Activated CD4-positive, alpha-beta T cell treated with anti-CD3 and anti-CD28 coated beads for 36 hours (primary cell): ENCODE measurements at regions of chr6 and their contacts with region 1.

Region 1: DNA sequence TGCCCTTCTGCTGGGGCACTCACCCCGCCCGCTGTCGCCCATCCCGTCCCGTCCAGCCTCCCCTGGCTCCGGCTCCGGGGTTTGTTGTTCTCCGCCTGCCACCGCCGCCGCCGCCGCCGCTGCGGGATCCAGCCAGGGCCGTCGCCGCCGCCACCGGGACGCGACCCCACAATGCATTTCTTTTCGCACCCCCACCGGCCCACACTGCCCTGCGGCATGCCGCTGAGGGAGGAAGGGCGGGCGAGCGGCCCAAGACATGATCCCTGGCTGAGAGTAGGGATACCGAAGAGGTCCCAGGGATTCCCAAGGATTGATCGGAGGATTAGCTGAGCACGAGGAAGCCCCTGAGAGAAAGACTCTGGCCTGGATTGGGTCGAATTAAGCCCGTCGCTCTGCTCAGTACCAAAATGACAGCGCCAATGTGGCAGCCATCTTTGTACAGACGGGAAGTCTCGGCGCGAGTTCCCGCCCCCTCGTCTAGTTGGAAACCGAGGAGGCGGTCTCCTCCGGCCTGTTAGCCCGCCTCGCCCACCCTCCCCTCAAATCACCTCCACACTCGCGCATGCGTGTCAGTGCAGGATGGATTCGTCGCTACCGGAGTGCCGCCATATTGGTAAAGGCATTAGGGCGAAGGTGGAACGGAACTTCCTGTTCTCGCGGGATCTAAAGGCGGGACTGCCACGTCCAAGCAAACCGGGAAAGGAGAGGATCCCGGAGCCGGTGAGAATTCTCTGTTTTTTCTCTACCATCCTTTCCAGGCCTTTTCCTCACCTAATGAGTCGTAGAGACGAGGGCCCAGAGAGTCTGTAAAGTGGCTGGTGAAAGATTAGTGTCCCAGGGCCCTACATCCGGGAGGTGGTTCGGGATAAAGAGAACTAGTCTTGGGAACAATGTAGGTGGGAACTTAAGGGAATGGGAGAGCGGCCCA is at the starts of genes RXRB and SLC39A7:
- DNase-seq: peak; percentile 100
- ATAC-seq: peak; percentile 64
- H3K4me3 Mint-ChIP-seq: peak within 1 kb of the TSS; percentile 100
- H3K27ac Mint-ChIP-seq: peak within 1 kb of the TSS; percentile 99
- H3K4me1 Mint-ChIP-seq: peaks cover 64% of the 10 kb centered on the region
- H3K27me3 Mint-ChIP-seq: no peaks in the 10 kb centered on the region
- total RNA-seq, gene RXRB: 41.0 to 45.4 TPM
- total RNA-seq, gene SLC39A7: 33.0 to 41.8 TPM

Region 2: GRCh38 chr6:32177788-32178546 is 1022.5 kb before region 1 on chr6 and contains the start of gene RNF5:
- CTCF ChIA-PET with region 1: no interaction called
- POLR2A ChIA-PET with region 1: no interaction called
- intact Hi-C with region 1: loop called (anchors 5 kb)
- DNase-seq: peak; percentile 96
- ATAC-seq: peak; percentile 89
- H3K4me3 Mint-ChIP-seq: peak within 1 kb of the TSS; percentile 92
- H3K27ac Mint-ChIP-seq: peak within 1 kb of the TSS; percentile 98
- H3K4me1 Mint-ChIP-seq: peaks cover 70% of the 10 kb centered on the region
- H3K27me3 Mint-ChIP-seq: no peaks in the 10 kb centered on the region
- total RNA-seq, gene RNF5: 51.7 to 65.6 TPM

Region 3: DNA sequence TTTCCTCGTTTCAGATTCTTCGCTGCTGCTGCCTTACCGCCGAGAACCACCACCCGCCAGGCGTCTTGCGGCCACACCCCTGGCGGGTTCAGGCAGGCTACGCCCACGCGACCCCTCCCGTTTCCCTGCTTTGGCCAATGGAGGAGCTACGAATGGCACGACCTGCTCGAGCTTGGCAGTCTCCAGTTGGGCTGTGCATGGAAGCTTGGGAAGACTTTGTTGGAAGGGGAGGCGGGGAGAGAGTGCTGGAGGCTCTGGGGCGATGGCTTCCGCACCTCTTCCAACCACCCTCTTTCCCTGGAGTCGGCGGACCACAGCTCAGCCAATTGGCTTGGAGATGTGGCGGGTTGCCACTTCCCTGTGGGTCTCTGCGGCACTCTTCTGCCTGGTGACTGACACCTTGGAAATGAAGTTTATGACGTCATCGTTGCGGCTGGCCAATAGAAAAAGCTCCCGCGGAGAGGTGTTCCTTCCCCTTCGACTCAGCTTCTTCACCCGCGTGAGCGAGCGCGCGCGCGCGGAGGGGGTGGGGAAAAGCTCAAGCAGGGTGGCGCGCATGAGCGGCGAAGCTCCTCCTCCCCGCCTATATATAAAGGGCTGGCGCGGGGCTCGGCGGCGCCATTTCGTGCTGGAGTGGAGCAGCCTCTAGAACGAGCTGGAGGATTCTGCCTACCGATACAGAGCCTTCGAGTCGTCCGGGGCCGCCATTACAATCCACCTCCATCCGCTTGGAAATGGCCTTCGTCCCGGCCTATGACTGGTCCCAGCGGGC is 228.7 kb before region 1 on chr6:
- CTCF ChIA-PET with region 1: no interaction called
- POLR2A ChIA-PET with region 1: interaction called, 7 read pairs
- intact Hi-C with region 1: loop called (anchors 1 to 5 kb)
- DNase-seq: peak; percentile 100
- ATAC-seq: peak; percentile 43
- H3K4me3 Mint-ChIP-seq: peak overlapping the region; percentile 98
- H3K27ac Mint-ChIP-seq: peak overlapping the region; percentile 100
- H3K4me1 Mint-ChIP-seq: peaks cover 27% of the 10 kb centered on the region
- H3K27me3 Mint-ChIP-seq: no peaks in the 10 kb centered on the region

Region 4: GRCh38 chr6:33000055-33000454 is 200.4 kb before region 1 on chr6:
- CTCF ChIA-PET with region 1: no interaction called
- POLR2A ChIA-PET with region 1: no interaction called
- intact Hi-C with region 1: no loop called
- DNase-seq: peak; percentile 45
- ATAC-seq: peak; percentile 65
- H3K4me3 Mint-ChIP-seq: no peak overlapping the region
- H3K27ac Mint-ChIP-seq: no peak overlapping the region
- H3K4me1 Mint-ChIP-seq: peaks cover 7% of the 10 kb centered on the region
- H3K27me3 Mint-ChIP-seq: peaks cover 15% of the 10 kb centered on the region

Region 5: GRCh38 chr6:33241968-33242367 is 41.5 kb after region 1 on chr6:
- CTCF ChIA-PET with region 1: interaction called, 10 read pairs
- POLR2A ChIA-PET with region 1: no interaction called
- intact Hi-C with region 1: loop called in 1 of 2 experiments (anchors 1 kb)
- DNase-seq: no peak
- ATAC-seq: peak; percentile 94
- H3K4me3 Mint-ChIP-seq: peak overlapping the region; percentile 35
- H3K27ac Mint-ChIP-seq: no peak overlapping the region
- H3K4me1 Mint-ChIP-seq: peaks cover 11% of the 10 kb centered on the region
- H3K27me3 Mint-ChIP-seq: peaks cover 19% of the 10 kb centered on the region

Region 6: GRCh38 chr6:33317669-33318425 is 117.4 kb after region 1 on chr6 and contains the start of gene ZBTB22:
- CTCF ChIA-PET with region 1: no interaction called
- POLR2A ChIA-PET with region 1: no interaction called
- intact Hi-C with region 1: loop called in 1 of 2 experiments (anchors 1 kb)
- DNase-seq: peak; percentile 98
- ATAC-seq: peak; percentile 69
- H3K4me3 Mint-ChIP-seq: peak within 1 kb of the TSS; percentile 80
- H3K27ac Mint-ChIP-seq: peak within 1 kb of the TSS; percentile 93
- H3K4me1 Mint-ChIP-seq: peaks cover 70% of the 10 kb centered on the region
- H3K27me3 Mint-ChIP-seq: no peaks in the 10 kb centered on the region
- total RNA-seq, gene ZBTB22: 9.0 to 9.9 TPM

Region 7: DNA sequence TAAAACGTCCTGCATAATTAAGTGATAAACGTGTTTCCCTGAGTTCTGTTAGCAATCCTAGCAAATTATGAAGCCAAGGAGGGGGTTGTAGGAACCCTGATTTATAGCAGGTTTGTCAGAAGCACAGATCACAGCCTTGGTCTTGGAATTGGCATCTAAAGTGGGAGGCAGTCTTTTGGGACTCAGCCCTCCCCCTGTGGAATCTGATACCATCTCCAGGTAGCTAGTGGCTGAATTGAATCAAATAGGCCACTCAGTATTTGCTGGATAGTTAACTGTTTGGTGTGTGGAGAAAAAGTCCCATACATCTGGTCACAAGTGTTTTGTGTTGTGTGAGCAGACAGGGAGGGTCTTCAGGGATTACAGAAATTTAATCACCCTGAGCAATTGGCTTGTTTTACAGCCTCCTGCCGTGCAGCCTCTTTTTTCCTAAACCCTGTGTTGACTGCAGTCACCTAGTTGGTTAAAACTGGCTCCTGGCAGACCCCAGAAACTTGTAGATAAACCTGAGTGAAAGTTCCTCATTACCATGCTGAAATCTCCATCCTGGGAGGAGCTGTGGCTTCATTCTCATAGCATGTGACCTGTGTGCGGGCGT is 172.1 kb after region 1 on chr6:
- CTCF ChIA-PET with region 1: no interaction called
- POLR2A ChIA-PET with region 1: no interaction called
- intact Hi-C with region 1: no loop called
- DNase-seq: no peak
- ATAC-seq: no peak
- H3K4me3 Mint-ChIP-seq: no peak overlapping the region
- H3K27ac Mint-ChIP-seq: no peak overlapping the region
- H3K4me1 Mint-ChIP-seq: peaks cover 5% of the 10 kb centered on the region
- H3K27me3 Mint-ChIP-seq: no peaks in the 10 kb centered on the region

Region 8: DNA sequence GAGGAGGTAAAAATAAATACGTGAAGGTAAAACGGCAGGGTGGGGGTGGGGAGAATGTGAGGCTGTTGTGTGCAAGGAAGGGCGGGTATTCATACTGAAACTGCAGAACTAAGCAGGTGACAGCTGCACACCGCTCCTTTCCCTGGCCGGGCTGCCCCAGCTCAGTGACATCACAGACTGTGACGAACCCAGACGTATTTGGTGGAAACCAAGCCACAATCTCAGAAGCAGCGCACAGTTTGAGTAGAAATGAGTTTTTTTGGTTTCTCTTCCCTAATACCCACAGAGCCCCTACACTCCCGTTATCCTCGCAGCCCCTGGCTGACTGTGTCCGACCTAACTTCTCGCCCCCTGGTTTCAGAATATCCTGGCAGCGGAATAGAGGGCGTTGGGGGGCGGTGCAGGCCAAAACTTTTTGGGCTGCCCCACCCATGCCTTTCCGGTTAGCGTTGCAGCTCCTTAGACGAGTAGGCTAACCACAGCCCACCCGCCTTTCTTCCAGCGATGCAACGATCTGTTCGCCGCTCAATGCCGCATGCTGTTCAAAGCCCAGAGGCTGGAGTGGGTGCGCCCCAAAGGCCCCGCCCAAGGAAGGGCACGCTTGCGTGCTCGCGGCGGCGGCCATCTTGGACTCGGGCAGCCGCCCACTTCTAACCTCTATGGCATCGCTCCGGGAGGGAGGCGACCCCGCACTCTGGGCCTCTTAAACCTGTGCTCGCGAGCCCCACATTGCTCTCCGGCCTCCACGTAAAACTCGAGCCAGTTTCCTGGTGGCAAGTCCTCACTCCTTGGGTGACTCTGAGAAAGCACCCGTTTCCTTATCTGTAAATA is 370.5 kb after region 1 on chr6:
- CTCF ChIA-PET with region 1: interaction called, 3 read pairs
- POLR2A ChIA-PET with region 1: no interaction called
- intact Hi-C with region 1: loop called in 1 of 2 experiments (anchors 2 kb)
- DNase-seq: peak; percentile 98
- ATAC-seq: peak; percentile 90
- H3K4me3 Mint-ChIP-seq: peak overlapping the region; percentile 81
- H3K27ac Mint-ChIP-seq: peak overlapping the region; percentile 100
- H3K4me1 Mint-ChIP-seq: peaks cover 42% of the 10 kb centered on the region
- H3K27me3 Mint-ChIP-seq: no peaks in the 10 kb centered on the region